ENCODE measurements at regions of chr6 and their contacts with region 1.

Region 1: DNA sequence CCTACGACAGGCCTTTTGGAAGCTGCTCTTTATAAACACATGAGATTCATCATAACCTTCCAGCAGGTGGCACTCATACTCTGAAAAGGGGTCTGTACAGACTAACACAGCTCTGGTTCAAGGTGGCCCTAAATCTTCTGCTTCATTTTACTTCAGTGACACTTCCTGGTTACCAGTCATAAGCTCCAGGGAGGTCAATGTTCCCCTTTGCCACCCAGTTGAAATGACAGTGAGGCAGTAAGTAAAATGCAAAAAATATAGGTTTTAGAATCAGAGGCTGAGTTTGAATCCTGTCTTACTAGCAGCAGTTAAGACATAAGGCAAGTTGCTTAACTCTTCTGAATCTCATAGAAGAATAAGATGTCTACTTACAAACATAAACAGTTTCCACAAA is 132.8 kb downstream of the CDK19 start:
- DNase-seq: no peak
- ATAC-seq: peak; percentile 94 to 99 (median 96)
- H3K4me3 ChIP-seq: no peak overlapping the region
- H3K27ac ChIP-seq: peak overlapping the region; percentile 41
- H3K4me1 ChIP-seq: peaks cover 15% of the 10 kb centered on the region
- H3K27me3 ChIP-seq: no peaks in the 10 kb centered on the region
- CTCF ChIP-seq: peak; percentile 81

Region 2: DNA sequence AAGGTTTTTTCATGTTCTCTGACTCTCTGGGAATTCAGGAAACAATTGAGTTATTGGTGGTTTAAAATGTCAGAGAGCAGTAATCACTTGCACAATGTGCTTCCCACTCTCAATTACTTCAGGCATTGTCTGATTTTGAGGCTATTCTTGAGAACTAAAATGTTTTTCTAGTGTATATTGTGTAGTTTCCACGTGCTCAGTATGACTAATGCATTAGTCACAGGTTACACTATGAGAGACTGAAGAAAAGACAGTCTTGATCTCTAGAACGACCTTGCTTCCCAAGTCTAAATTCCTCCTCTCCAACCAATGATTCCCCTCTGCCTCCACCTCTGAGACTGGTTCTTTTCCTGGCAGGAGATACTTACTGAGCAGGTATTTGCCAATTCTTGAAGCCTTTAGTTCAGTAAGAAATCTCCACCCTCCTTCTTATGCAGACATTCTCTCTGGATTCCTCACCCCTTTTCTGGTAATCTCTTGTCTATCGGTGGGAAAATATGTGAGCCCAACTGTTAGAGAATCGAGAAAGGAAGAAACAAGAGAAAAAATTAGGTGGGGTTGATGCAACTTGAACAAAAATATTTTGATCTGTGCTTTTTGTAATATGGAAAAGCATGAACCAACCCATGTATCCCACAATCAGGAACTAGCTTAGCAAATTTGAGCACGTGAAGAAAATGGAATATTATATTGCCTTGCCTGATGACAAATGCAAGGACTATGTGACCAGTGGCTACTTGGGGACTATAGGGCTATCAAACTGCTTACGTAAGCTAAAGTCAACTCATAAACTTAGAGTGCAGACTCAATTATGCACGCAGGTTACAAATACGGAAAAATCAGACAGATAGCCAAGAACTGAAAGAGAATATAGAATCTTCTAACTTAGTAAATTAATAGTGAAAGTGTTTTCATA is 145.0 kb before region 1 on chr6:
- intact Hi-C with region 1: loop called in 1 of 2 experiments (anchors 10 kb)
- DNase-seq: no peak
- ATAC-seq: peak in 2 of 4 donors; percentile 23 to 41
- H3K4me3 ChIP-seq: no peak overlapping the region
- H3K27ac ChIP-seq: no peak overlapping the region
- H3K4me1 ChIP-seq: no peaks in the 10 kb centered on the region
- H3K27me3 ChIP-seq: no peaks in the 10 kb centered on the region
- CTCF ChIP-seq: no peak

Region 3: GRCh38 chr6:110635096-110635495 is 47.4 kb before region 1 on chr6:
- intact Hi-C with region 1: no loop called
- DNase-seq: no peak
- ATAC-seq: no peak
- H3K4me3 ChIP-seq: no peak overlapping the region
- H3K27ac ChIP-seq: no peak overlapping the region
- H3K4me1 ChIP-seq: no peaks in the 10 kb centered on the region
- H3K27me3 ChIP-seq: no peaks in the 10 kb centered on the region
- CTCF ChIP-seq: no peak

Region 4: GRCh38 chr6:110815217-110816109 is 133.0 kb after region 1 on chr6 and contains the start of gene CDK19:
- intact Hi-C with region 1: loop called (anchors 5 to 10 kb)
- DNase-seq: peak; percentile 98 to 99
- ATAC-seq: peak; percentile 97 to 98 (median 98)
- H3K4me3 ChIP-seq: peak within 1 kb of the TSS; percentile 90
- H3K27ac ChIP-seq: peak within 1 kb of the TSS; percentile 90
- H3K4me1 ChIP-seq: peaks cover 9% of the 10 kb centered on the region
- H3K27me3 ChIP-seq: no peaks in the 10 kb centered on the region
- CTCF ChIP-seq: no peak
- total RNA-seq, gene CDK19: 4.7 to 11.6 (median 5.6) TPM

Region 5: GRCh38 chr6:110873981-110874879 is 191.8 kb after region 1 on chr6 and contains the start of gene AMD1:
- intact Hi-C with region 1: loop called in 1 of 2 experiments (anchors 5 kb)
- DNase-seq: peak; percentile 97 to 98
- ATAC-seq: peak; percentile 81 to 87 (median 84)
- H3K4me3 ChIP-seq: peak within 1 kb of the TSS; percentile 93
- H3K27ac ChIP-seq: peak within 1 kb of the TSS; percentile 99
- H3K4me1 ChIP-seq: peaks cover 21% of the 10 kb centered on the region
- H3K27me3 ChIP-seq: no peaks in the 10 kb centered on the region
- CTCF ChIP-seq: peak; percentile 7
- total RNA-seq, gene AMD1: 19.2 to 46.6 (median 42.8) TPM

Region 6: GRCh38 chr6:110882271-110882613 is 199.8 kb after region 1 on chr6:
- intact Hi-C with region 1: loop called (anchors 5 kb)
- DNase-seq: no peak
- ATAC-seq: peak in 2 of 4 donors; percentile 7 to 8
- H3K4me3 ChIP-seq: peak overlapping the region; percentile 5
- H3K27ac ChIP-seq: no peak overlapping the region
- H3K4me1 ChIP-seq: peaks cover 78% of the 10 kb centered on the region
- H3K27me3 ChIP-seq: no peaks in the 10 kb centered on the region
- CTCF ChIP-seq: no peak

Region 7: DNA sequence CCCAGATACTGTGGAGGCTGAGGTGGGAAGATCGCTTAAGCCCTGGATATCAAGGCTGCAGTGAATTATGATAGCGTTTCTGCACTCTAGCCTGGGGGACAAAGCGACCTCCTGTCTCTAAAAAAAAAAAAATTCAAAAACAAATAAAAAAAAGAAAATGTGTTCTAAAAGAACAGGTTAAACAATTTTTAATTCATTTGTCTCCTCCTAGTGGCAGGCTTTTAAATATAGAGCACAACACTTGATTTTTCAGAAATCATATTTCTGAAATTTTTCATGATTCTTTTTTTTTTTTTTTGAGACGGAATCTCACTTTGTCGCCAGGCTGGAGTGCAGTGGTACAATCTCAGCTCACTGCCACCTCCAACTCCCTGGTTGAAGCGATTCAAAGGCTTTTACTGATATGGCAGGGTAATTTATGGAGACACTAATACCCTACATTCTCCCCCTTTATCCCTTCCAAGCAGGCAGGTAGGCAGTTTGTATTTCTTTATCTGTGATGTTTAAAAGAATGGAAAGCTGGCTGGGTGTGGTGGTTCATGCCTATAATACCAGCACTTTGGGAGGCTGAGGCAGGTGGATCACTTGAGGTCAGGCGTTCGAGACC is 267.3 kb after region 1 on chr6:
- intact Hi-C with region 1: loop called (anchors 1 to 2 kb)
- DNase-seq: no peak
- ATAC-seq: peak in 1 of 4 donors; percentile 65
- H3K4me3 ChIP-seq: no peak overlapping the region
- H3K27ac ChIP-seq: no peak overlapping the region
- H3K4me1 ChIP-seq: no peaks in the 10 kb centered on the region
- H3K27me3 ChIP-seq: no peaks in the 10 kb centered on the region
- CTCF ChIP-seq: peak; percentile 57

Measured in psoas muscle (tissue), 8 donors.